Endothelial cell of umbilical vein (primary cell): ENCODE measurements at regions of chr12 and their contacts with region 1.

Region 1: GRCh38 chr12:49538510-49539403 is at the start of gene KCNH3:
- DNase-seq: peak; percentile 29
- H3K4me3 ChIP-seq: peak within 1 kb of the TSS in 1 of 3 experiments; percentile 17
- H3K27ac ChIP-seq: no peak within 1 kb of the TSS
- H3K4me1 ChIP-seq: peaks cover 8% of the 10 kb centered on the region
- H3K27me3 ChIP-seq: peaks cover 20 to 35% of the 10 kb centered on the region in 2 experiments
- CTCF ChIP-seq: no peak
- POLR2A ChIP-seq: no peak
- total RNA-seq, gene KCNH3: 0.13 and 0.18 TPM in 2 replicates

Region 2: GRCh38 chr12:49415521-49415970 is 123.2 kb before region 1 on chr12:
- CTCF ChIA-PET with region 1: no interaction called
- POLR2A ChIA-PET with region 1: interaction called, 10 read pairs
- dilution Hi-C with region 1: no loop called
- intact Hi-C with region 1: no loop called
- DNase-seq: no peak
- H3K4me3 ChIP-seq: no peak overlapping the region
- H3K27ac ChIP-seq: no peak overlapping the region
- H3K4me1 ChIP-seq: no peaks in the 10 kb centered on the region
- H3K27me3 ChIP-seq: no peaks in the 10 kb centered on the region
- CTCF ChIP-seq: no peak
- POLR2A ChIP-seq: no peak